ENCODE measurements at regions of chr1 and their contacts with region 1.

Region 1: DNA sequence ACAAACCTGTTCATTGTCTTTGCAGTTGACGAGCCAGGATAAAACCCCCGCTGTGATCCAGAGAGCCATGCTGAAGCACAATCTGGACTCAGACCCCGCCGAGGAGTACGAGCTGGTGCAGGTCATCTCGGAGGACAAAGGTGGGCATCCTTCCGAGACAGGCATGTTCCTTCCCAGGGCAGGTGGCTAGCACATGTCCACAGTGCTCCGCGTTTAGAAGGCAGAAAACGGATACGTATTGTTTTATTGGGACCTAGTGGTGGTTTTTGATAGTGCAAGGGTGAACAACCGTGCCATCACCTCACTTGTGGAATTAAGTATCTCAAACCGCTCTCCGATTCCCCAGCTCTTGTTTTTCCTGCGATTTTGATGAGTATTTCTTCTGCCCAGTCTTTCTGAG is 115.3 kb downstream of the COLGALT2 start:
- DNase-seq: no peak

Region 2: DNA sequence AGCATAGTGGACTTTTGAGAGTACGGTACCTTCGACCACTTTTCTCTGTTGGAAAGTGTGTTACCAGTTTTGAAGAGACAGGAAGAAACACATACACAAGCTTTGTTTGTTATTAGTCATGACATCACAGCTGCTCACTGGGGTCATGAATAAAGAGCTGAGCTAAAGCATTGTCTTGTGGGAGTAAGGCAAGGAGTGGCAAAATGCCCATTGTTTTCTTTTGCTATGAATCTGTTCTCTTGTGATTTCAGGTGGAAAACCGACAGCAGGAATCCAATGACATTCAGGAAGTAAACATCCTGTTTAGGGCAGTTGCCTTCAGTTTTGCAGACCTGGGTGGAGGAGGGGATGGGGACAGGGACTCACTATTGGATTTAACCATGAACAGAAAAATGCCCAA is 51.1 kb before region 1 on chr1:
- intact Hi-C with region 1: no loop called
- DNase-seq: peak in 17 of 42 donors; percentile 3 to 76 (median 47)

Region 3: GRCh38 chr1:184036517-184036949 is 114.3 kb after region 1 on chr1:
- intact Hi-C with region 1: loop called (anchors 5 kb)
- DNase-seq: peak in 26 of 42 donors; percentile 46 to 86 (median 63)

Region 4: DNA sequence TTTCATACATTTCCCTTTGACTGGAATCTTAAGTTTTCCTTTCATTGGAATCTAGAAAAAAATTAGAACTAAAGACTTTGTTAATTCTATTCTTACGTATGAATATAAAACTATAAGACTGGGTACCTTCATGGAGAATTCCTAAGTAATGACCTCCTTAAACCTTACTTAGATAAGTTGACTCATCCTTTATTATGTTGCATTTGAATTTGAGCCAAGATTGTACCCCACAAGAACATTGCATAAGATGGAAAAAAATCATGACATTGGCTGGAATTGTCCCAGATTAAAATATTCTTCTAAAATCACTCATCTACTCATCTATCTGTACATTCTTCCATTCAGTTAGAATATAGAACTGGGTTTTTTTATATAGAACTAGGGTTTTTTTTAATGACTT is 602.1 kb after region 1 on chr1:
- intact Hi-C with region 1: no loop called
- DNase-seq: no peak

Measured in head of caudate nucleus (tissue), 42 donors.